Ascending aorta (tissue), 2 donors: ENCODE measurements at regions of chrX and their contacts with region 1.

Region 1: GRCh38 chrX:148691456-148691855 is 191.0 kb downstream of the AFF2 start:
- DNase-seq: no peak
- H3K4me3 ChIP-seq: no peak overlapping the region
- H3K27ac ChIP-seq: no peak overlapping the region
- H3K4me1 ChIP-seq: no peaks in the 10 kb centered on the region
- H3K27me3 ChIP-seq: no peaks in the 10 kb centered on the region
- CTCF ChIP-seq: no peak

Region 2: DNA sequence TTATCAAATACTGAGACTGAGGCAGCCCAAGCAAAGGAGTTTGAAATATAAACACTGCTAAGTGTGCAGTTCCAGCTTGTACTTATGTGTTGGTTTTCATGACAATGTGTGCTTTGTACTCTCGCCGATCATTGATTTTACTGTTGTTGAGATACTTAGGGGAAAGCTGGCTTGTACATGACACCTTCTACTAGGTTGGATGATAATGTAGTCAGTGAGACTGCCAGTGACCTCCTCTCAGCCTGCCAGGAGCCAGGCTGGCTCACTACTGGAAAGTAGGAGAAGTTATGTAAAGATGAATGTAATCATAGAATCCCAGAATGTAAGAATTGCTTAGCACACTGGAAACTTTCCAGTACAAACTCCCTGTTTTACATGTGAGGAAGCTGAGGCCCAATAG is 59.0 kb before region 1 on chrX:
- intact Hi-C with region 1: loop called (anchors 10 kb)
- DNase-seq: no peak
- H3K4me3 ChIP-seq: no peak overlapping the region
- H3K27ac ChIP-seq: no peak overlapping the region
- H3K4me1 ChIP-seq: no peaks in the 10 kb centered on the region
- H3K27me3 ChIP-seq: no peaks in the 10 kb centered on the region
- CTCF ChIP-seq: no peak